CD4-positive, alpha-beta memory T cell (primary cell): ENCODE measurements at regions of chr7 and their contacts with region 1.

Region 1: GRCh38 chr7:102450242-102450641 is 14.4 kb downstream of the ALKBH4 start:
- DNase-seq: peak; percentile 46 to 62 (median 55)
- H3K4me3 ChIP-seq: no peak overlapping the region
- H3K4me3 Mint-ChIP-seq: no peak overlapping the region
- H3K27ac ChIP-seq: no peak overlapping the region
- H3K27ac Mint-ChIP-seq: peak overlapping the region in 5 of 7 donors; percentile 67 to 83 (median 75)
- H3K4me1 ChIP-seq: no peaks in the 10 kb centered on the region
- H3K4me1 Mint-ChIP-seq: peaks cover 0 to 4% (median 2%) of the 10 kb centered on the region in 4 donors
- H3K27me3 ChIP-seq: no peaks in the 10 kb centered on the region
- H3K27me3 Mint-ChIP-seq: no peaks in the 10 kb centered on the region

Region 2: GRCh38 chr7:102093287-102094001 is 356.8 kb before region 1 on chr7:
- CTCF ChIA-PET with region 1: no interaction called
- POLR2A ChIA-PET with region 1: no interaction called
- intact Hi-C with region 1: no loop called
- DNase-seq: no peak
- H3K4me3 ChIP-seq: no peak overlapping the region
- H3K4me3 Mint-ChIP-seq: no peak overlapping the region
- H3K27ac ChIP-seq: no peak overlapping the region
- H3K27ac Mint-ChIP-seq: no peak overlapping the region
- H3K4me1 ChIP-seq: no peaks in the 10 kb centered on the region
- H3K4me1 Mint-ChIP-seq: peaks cover 0 to 3% (median under 1%) of the 10 kb centered on the region in 4 donors
- H3K27me3 ChIP-seq: no peaks in the 10 kb centered on the region
- H3K27me3 Mint-ChIP-seq: no peaks in the 10 kb centered on the region

Region 3: GRCh38 chr7:102279537-102280400 is 170.5 kb before region 1 on chr7:
- CTCF ChIA-PET with region 1: no interaction called
- POLR2A ChIA-PET with region 1: no interaction called
- intact Hi-C with region 1: loop called (anchors 2 kb)
- DNase-seq: peak; percentile 46 to 57 (median 54)
- H3K4me3 ChIP-seq: no peak overlapping the region
- H3K4me3 Mint-ChIP-seq: no peak overlapping the region
- H3K27ac ChIP-seq: no peak overlapping the region
- H3K27ac Mint-ChIP-seq: peak overlapping the region in 2 of 7 donors; percentile 60 to 67
- H3K4me1 ChIP-seq: peaks cover 4% of the 10 kb centered on the region
- H3K4me1 Mint-ChIP-seq: peaks cover 4 to 17% (median 10%) of the 10 kb centered on the region in 4 donors
- H3K27me3 ChIP-seq: no peaks in the 10 kb centered on the region
- H3K27me3 Mint-ChIP-seq: no peaks in the 10 kb centered on the region

Region 4: GRCh38 chr7:102404005-102404861 is 46.0 kb before region 1 on chr7:
- CTCF ChIA-PET with region 1: interaction called, 134 read pairs
- POLR2A ChIA-PET with region 1: interaction called, 8 read pairs
- intact Hi-C with region 1: loop called (anchors 1 kb)
- DNase-seq: peak; percentile 64 to 72 (median 65)
- H3K4me3 ChIP-seq: no peak overlapping the region
- H3K4me3 Mint-ChIP-seq: no peak overlapping the region
- H3K27ac ChIP-seq: no peak overlapping the region
- H3K27ac Mint-ChIP-seq: peak overlapping the region; percentile 27 to 79 (median 71)
- H3K4me1 ChIP-seq: no peaks in the 10 kb centered on the region
- H3K4me1 Mint-ChIP-seq: peaks cover 5 to 9% (median 7%) of the 10 kb centered on the region in 4 donors
- H3K27me3 ChIP-seq: no peaks in the 10 kb centered on the region
- H3K27me3 Mint-ChIP-seq: no peaks in the 10 kb centered on the region

Region 5: GRCh38 chr7:102412548-102412947 is 37.7 kb before region 1 on chr7:
- CTCF ChIA-PET with region 1: interaction called, 134 read pairs
- POLR2A ChIA-PET with region 1: interaction called, 13 read pairs
- intact Hi-C with region 1: loop called (anchors 2 kb)
- DNase-seq: peak in 4 of 5 donors; percentile 42 to 56 (median 44)
- H3K4me3 ChIP-seq: no peak overlapping the region
- H3K4me3 Mint-ChIP-seq: no peak overlapping the region
- H3K27ac ChIP-seq: no peak overlapping the region
- H3K27ac Mint-ChIP-seq: peak overlapping the region; percentile 53 to 92 (median 78)
- H3K4me1 ChIP-seq: peaks cover 37% of the 10 kb centered on the region
- H3K4me1 Mint-ChIP-seq: peaks cover 24 to 41% (median 31%) of the 10 kb centered on the region in 4 donors
- H3K27me3 ChIP-seq: no peaks in the 10 kb centered on the region
- H3K27me3 Mint-ChIP-seq: no peaks in the 10 kb centered on the region

Region 6: DNA sequence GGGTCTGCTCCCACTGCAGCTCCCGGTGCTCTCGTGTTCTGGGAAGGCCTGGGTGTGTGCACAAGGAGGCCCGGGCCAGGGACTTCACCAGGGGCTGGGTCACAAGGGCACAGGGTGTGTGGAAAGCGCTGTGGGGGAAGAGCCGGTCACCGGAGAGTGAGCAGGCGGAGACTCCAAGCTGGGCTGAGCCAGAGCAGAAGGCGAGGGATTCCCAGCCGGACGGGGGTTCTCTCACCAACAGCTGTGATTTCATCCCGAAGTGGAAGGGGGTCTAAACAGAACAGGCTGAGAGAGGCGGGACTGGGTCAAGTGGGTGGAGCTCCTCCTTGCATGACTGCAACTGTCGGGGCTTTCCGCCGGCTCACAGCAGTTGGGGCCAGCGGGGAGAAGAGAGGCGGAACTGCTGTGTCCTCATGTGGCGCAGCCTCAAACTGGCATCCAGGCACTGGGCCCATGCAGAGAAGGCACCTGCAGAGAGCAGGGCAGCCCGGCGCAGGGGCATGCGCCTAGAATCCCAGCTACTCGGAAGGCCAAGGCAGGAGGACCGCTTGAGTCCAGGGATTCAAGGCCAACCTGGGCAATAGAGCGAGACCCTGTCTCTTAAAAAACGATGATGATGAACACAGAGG is 24.5 kb before region 1 on chr7:
- CTCF ChIA-PET with region 1: interaction called, 8 read pairs
- POLR2A ChIA-PET with region 1: interaction called, 11 read pairs
- intact Hi-C with region 1: no loop called
- DNase-seq: peak; percentile 80 to 94 (median 84)
- H3K4me3 ChIP-seq: peak overlapping the region; percentile 48 to 49
- H3K4me3 Mint-ChIP-seq: peak overlapping the region; percentile 83 to 92 (median 87)
- H3K27ac ChIP-seq: peak overlapping the region; percentile 98
- H3K27ac Mint-ChIP-seq: peak overlapping the region; percentile 100
- H3K4me1 ChIP-seq: peaks cover 83% of the 10 kb centered on the region
- H3K4me1 Mint-ChIP-seq: peaks cover 39 to 75% (median 56%) of the 10 kb centered on the region in 4 donors
- H3K27me3 ChIP-seq: no peaks in the 10 kb centered on the region
- H3K27me3 Mint-ChIP-seq: no peaks in the 10 kb centered on the region

Region 7: DNA sequence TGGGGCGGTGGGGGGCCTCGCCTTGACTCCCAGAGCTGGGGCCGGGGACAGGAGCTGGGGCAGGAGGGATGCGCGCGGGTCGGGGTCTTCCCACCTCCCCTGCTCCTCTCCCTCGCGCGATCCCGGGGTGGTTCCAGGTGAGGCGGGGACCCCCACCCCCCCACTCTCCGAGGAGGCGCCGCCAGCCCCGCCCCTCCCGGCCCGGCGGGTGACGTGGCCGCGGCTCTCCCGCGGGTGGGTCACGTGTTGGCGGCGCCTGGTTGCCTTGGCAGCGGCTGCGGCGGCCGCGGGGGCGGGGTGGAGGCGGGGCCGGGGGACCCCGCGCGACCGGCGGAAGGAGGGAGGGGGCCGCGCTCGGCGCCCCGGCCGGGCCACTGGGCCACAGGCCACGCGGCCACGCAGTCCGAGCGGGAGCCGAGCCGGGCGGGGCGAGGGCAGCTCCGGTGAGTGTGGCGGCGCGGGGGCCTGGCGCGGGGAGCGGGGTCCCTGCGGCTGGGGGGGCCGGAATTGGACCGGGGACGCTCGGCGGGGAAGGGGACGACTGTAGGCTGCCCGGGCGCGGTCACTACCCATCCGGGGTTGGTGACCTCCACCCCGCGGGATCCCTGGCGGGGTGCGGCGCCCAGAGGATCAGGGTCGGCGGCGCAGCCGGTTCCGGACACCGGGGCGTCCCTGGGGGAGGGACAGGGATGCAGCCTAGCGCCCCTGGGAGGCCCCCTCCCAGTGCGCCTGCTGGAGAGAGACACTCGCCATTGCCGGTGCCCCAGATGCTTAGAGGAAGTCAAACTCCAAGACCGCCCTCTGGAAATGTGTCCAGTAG is 16.8 kb before region 1 on chr7 and contains the start of gene ORAI2:
- CTCF ChIA-PET with region 1: interaction called, 12 read pairs
- POLR2A ChIA-PET with region 1: interaction called, 5 read pairs
- intact Hi-C with region 1: no loop called
- DNase-seq: peak; percentile 81 to 86 (median 84)
- H3K4me3 ChIP-seq: peak within 1 kb of the TSS; percentile 74 to 76
- H3K4me3 Mint-ChIP-seq: peak within 1 kb of the TSS; percentile 80 to 90 (median 88)
- H3K27ac ChIP-seq: peak within 1 kb of the TSS; percentile 88
- H3K27ac Mint-ChIP-seq: peak within 1 kb of the TSS; percentile 98 to 100 (median 100)
- H3K4me1 ChIP-seq: peaks cover 61% of the 10 kb centered on the region
- H3K4me1 Mint-ChIP-seq: peaks cover 26 to 62% (median 43%) of the 10 kb centered on the region in 4 donors
- H3K27me3 ChIP-seq: no peaks in the 10 kb centered on the region
- H3K27me3 Mint-ChIP-seq: no peaks in the 10 kb centered on the region
- total RNA-seq, gene ORAI2: 29.0 to 31.6 TPM

Region 8: GRCh38 chr7:102440078-102440795 is 10.0 kb before region 1 on chr7:
- CTCF ChIA-PET with region 1: interaction called, 12 read pairs
- POLR2A ChIA-PET with region 1: interaction called, 5 read pairs
- intact Hi-C with region 1: no loop called
- DNase-seq: no peak
- H3K4me3 ChIP-seq: no peak overlapping the region
- H3K4me3 Mint-ChIP-seq: no peak overlapping the region
- H3K27ac ChIP-seq: no peak overlapping the region
- H3K27ac Mint-ChIP-seq: no peak overlapping the region
- H3K4me1 ChIP-seq: peaks cover under 1% of the 10 kb centered on the region
- H3K4me1 Mint-ChIP-seq: peaks cover 3 to 9% (median 5%) of the 10 kb centered on the region in 4 donors
- H3K27me3 ChIP-seq: no peaks in the 10 kb centered on the region
- H3K27me3 Mint-ChIP-seq: no peaks in the 10 kb centered on the region

Region 9: GRCh38 chr7:102978280-102978679 is 528.0 kb after region 1 on chr7:
- CTCF ChIA-PET with region 1: no interaction called
- POLR2A ChIA-PET with region 1: no interaction called
- intact Hi-C with region 1: no loop called
- DNase-seq: no peak
- H3K4me3 ChIP-seq: no peak overlapping the region
- H3K4me3 Mint-ChIP-seq: no peak overlapping the region
- H3K27ac ChIP-seq: no peak overlapping the region
- H3K27ac Mint-ChIP-seq: no peak overlapping the region
- H3K4me1 ChIP-seq: no peaks in the 10 kb centered on the region
- H3K4me1 Mint-ChIP-seq: no peaks in the 10 kb centered on the region
- H3K27me3 ChIP-seq: no peaks in the 10 kb centered on the region
- H3K27me3 Mint-ChIP-seq: peaks cover 4 to 5% of the 10 kb centered on the region in 2 donors